Activated CD4-positive, alpha-beta memory T cell treated with anti-CD3 and anti-CD28 coated beads, Interleukin-2, amount 10 ng/mL, durations not matched to agents 7 days and 5 days (primary cell): ENCODE measurements at regions of chr11 and their contacts with region 1.

Region 1: DNA sequence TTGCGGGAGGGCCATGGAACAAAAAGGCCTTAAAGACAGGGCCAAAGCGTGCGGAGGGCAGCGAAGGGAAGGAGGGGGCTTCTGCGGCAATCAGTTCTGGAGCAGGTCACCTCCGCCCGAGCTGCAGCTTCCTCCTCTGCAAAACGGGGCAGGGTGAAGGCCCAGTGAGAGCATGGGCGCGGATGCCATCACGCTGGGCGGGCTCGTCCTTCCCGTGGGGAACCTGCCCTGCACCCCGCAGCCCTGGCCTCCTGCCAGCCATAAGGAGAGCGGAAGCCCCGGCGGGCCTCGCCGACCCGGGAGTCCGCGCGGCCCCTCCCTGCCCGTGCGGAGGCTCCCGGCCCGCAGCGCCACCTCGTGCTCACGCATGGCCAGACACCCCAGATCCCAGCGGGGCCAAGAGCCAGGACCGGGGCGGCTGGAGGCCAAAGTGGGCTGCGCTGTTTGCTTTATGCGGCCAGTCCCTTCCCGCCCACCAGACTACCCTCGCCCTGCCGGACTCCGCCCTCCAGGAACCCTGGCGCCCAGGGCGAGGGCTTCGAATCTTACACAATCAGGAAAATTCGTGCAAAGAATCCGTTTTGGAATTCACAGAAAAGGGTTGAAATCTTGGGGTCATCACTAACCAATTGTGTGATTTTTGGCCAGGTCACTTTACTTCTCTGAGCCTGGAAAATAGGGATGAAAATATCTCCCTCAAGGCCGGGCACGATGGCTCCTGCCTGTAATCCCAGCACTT is 16.1 kb downstream of the TSKU start:
- DNase-seq: peak; percentile 80
- H3K4me3 Mint-ChIP-seq: no peak overlapping the region
- H3K27ac Mint-ChIP-seq: no peak overlapping the region
- H3K4me1 Mint-ChIP-seq: peaks cover 15% of the 10 kb centered on the region
- H3K27me3 Mint-ChIP-seq: peaks cover 6% of the 10 kb centered on the region

Region 2: DNA sequence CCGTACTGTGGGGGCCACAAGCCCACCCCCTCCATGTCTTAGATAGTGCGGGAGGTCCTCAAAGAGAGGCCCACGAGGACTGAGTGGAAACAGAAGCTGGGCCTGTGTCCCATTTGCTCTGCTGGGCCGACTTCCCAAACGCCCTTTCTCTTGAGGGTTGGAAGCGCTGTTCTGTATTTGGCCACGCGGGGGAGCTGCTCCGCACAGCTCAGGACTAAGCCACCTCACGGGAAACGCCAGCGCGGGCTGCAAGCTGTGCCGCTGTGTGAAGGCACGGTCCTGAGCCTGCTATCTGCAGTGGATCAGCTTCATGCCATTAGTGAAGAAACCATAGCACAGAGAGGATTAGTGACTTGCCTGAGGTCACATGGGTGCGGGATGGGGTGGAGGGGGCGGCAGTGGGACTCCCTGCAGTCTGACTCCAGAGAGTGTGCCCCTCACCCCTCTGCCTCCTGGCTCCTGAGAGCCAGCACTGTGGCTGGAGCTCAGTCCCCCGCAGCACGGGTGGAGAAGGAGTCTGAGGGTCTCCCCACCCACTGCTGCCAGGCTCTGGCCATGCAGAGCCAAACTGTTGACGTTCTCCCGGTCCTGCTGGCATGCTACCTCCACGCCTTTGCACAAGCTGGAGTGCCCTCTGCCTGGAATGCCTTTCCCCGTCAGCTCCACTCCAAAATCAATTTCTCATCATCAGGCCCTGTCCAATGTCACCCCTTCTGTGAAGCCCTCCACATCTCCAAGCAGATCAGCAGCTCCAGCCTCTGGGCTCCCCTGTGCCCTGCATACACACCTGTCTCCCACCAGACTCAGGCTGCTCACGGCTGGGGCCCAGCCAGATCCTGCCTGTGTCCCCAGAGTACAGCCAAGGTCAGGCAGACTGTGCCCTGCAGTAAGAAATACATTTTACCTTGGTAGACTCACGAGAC is 77.2 kb before region 1 on chr11:
- CTCF ChIA-PET with region 1: interaction called, 29 read pairs
- POLR2A ChIA-PET with region 1: interaction called, 3 read pairs
- DNase-seq: peak; percentile 79
- H3K4me3 Mint-ChIP-seq: no peak overlapping the region
- H3K27ac Mint-ChIP-seq: no peak overlapping the region
- H3K4me1 Mint-ChIP-seq: peaks cover 7% of the 10 kb centered on the region
- H3K27me3 Mint-ChIP-seq: peaks cover 28% of the 10 kb centered on the region

Region 3: DNA sequence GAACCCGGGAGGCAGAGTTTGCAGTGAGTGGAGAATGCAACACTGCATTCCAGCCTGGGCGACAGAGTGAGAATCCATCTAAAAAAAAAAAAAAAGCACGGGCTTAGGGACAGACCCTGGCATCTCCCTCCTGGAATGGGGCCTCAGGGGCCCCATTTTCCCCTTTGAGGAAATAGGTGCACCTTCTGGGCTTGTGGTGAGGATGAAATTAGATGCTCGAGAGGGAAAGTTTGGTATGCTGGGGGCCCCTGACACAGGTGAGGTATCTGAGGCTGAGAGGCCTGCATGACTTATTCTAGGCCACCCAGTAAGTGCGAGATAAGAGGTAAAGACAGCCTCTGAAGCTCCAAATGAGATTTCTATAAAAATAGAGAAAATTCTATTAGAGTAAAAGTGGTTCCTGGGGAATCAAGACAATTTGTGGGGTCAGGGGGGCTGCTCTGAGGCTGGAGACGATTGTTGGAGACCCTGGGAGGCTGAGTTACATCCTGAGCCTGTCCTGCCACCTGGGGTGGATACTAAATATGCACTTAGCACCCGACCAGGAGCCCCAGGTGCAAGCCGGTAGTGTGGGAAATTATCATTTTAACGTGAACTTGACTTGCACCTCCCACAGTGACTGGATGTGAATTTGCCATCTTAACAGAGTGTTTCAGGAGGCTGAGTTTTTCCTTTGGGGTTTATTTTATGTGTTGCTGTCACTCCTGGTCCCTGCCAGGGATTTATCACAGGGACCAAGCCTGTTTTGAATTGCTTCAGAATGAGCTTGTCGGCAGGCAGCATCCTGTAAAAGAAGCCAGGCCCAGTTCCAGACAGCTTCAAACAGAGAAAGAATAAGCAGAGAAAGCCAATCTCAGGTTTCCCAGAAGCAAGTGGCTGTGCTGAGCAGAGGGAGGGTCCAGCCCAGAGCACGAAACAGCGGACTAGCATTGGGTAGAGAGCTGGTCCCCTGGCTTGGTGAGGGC is 64.5 kb before region 1 on chr11:
- CTCF ChIA-PET with region 1: interaction called, 129 read pairs
- POLR2A ChIA-PET with region 1: interaction called, 4 read pairs
- DNase-seq: no peak
- H3K4me3 Mint-ChIP-seq: no peak overlapping the region
- H3K27ac Mint-ChIP-seq: no peak overlapping the region
- H3K4me1 Mint-ChIP-seq: peaks cover 4% of the 10 kb centered on the region
- H3K27me3 Mint-ChIP-seq: peaks cover 15% of the 10 kb centered on the region